Breast epithelium (tissue), 4 donors: ENCODE measurements at regions of chr15 and their contacts with region 1.

Region 1: DNA sequence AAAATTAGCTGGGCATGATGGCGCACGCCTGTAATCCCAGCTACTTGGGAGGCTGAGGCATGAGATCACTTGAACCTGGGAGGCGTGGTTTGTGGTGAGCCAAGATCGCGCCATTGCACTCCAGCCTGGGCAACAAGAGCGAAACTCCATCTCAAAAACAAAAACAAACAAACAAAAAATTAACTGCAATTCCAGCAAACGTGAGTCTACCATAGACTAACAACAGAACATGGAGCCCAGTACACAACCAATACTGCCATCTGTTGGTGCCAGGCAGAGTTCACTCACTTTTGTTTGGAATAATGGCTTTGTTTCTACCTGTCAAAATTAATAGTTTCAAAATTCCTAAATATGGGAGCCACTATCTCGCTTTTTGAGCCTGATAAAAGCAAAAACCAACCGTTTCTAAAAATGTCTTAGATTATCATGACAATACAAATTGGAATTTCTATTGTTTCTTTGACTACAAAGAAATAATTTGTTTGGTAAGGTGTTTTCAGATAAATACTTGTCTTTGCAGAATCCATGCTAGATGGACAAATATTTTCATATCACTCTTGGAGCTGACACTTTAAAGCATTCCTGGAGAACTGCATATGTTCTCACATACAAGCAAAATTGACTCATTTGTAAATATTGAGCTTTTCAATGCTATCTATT is 45.0 kb downstream of the GPR176 start:
- DNase-seq: no peak
- H3K4me3 ChIP-seq: no peak overlapping the region
- H3K27ac ChIP-seq: no peak overlapping the region
- H3K4me1 ChIP-seq: no peaks in the 10 kb centered on the region
- H3K27me3 ChIP-seq: no peaks in the 10 kb centered on the region
- CTCF ChIP-seq: peak in 2 of 3 donors; percentile 32 to 70
- POLR2A ChIP-seq: no peak

Region 2: DNA sequence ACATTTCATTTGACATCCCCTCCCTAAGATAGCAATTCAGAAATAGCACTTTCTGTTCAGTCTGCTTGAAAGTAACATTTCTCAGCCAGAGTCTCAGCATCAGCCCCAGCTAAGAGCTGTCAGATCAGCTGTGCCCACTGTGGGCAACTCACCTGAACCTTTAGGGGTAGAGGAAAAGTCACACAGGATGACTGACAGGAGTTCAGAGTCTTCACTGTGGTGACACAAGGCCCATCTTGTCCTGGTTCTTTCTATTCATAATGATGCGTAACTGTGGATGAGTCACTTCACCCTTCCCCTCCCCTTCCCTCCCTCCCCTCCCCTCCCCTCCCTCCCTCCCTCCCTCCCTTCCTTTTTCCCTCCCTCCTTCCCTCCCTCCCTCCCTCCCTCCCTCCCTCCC is 1214.3 kb before region 1 on chr15:
- intact Hi-C with region 1: no loop called
- DNase-seq: no peak
- H3K4me3 ChIP-seq: no peak overlapping the region
- H3K27ac ChIP-seq: no peak overlapping the region
- H3K4me1 ChIP-seq: no peaks in the 10 kb centered on the region
- H3K27me3 ChIP-seq: no peaks in the 10 kb centered on the region
- CTCF ChIP-seq: no peak
- POLR2A ChIP-seq: no peak

Region 3: GRCh38 chr15:39720621-39721611 is 154.1 kb before region 1 on chr15:
- intact Hi-C with region 1: no loop called
- DNase-seq: no peak
- H3K4me3 ChIP-seq: no peak overlapping the region
- H3K27ac ChIP-seq: no peak overlapping the region
- H3K4me1 ChIP-seq: no peaks in the 10 kb centered on the region
- H3K27me3 ChIP-seq: no peaks in the 10 kb centered on the region
- CTCF ChIP-seq: no peak
- POLR2A ChIP-seq: no peak

Region 4: GRCh38 chr15:39756806-39757522 is 118.1 kb before region 1 on chr15:
- intact Hi-C with region 1: no loop called
- DNase-seq: no peak
- H3K4me3 ChIP-seq: no peak overlapping the region
- H3K27ac ChIP-seq: no peak overlapping the region
- H3K4me1 ChIP-seq: no peaks in the 10 kb centered on the region
- H3K27me3 ChIP-seq: no peaks in the 10 kb centered on the region
- CTCF ChIP-seq: peak; percentile 29 to 78 (median 73)
- POLR2A ChIP-seq: no peak

Region 5: GRCh38 chr15:39799552-39800011 is 75.4 kb before region 1 on chr15:
- intact Hi-C with region 1: loop called (anchors 10 kb)
- DNase-seq: no peak
- H3K4me3 ChIP-seq: no peak overlapping the region
- H3K27ac ChIP-seq: no peak overlapping the region
- H3K4me1 ChIP-seq: no peaks in the 10 kb centered on the region
- H3K27me3 ChIP-seq: no peaks in the 10 kb centered on the region
- CTCF ChIP-seq: no peak
- POLR2A ChIP-seq: no peak